Dendritic cell treated with granulocyte-macrophage colony-stimulating factor and Interleukin-4, amounts not matched to agents 40 ng/mL and 50 ng/mL, for 4 days (primary cell): ENCODE measurements at regions of chr16 and their contacts with region 1.

Region 1: GRCh38 chr16:83956336-83957289 is 3.6 kb downstream of the OSGIN1 start:
- H3K4me3 Mint-ChIP-seq: no peak overlapping the region
- H3K27ac Mint-ChIP-seq: no peak overlapping the region
- H3K4me1 Mint-ChIP-seq: peaks cover 41% of the 10 kb centered on the region
- H3K27me3 Mint-ChIP-seq: peaks cover 2% of the 10 kb centered on the region

Region 2: DNA sequence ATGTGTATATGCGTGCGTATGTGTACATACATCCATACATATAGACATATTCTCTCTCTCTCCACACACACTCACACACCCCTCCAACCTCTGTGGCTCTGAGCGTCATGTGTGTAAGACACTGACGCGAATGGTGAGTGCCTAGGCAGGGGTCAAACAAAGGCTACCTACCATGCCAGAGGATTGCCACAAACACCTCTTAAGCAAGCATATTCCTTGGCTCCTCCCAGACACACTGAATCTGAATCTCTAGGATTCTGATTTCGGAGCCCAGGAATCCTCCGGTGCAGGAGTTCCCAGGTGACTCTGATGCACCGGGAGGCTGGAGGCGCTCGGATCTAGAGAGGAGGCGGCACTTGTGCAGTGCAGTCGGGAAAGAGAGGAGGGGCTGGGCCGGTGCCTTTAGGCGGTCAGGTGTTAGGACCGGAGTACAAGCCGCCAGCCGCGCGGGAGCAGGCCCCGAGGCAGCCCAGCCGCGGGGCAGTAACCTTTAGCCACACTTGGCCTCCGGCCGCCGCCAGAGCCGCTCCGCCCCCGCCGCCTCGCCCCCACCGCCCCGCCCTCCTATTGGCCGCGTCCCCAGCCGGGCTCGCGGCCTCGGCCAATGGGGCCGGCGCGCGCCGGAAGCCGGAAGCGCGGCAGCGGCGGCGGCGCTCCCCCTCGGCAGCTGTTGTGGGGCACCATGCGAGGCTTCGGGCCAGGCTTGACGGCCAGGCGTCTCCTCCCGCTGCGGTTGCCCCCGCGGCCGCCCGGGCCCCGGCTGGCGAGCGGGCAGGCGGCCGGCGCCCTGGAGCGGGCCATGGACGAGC is 57.9 kb before region 1 on chr16 and contains the start of gene MLYCD:
- intact Hi-C with region 1: no loop called
- H3K4me3 Mint-ChIP-seq: peak within 1 kb of the TSS; percentile 89
- H3K27ac Mint-ChIP-seq: peak within 1 kb of the TSS; percentile 85
- H3K4me1 Mint-ChIP-seq: peaks cover 28% of the 10 kb centered on the region
- H3K27me3 Mint-ChIP-seq: peaks cover 12% of the 10 kb centered on the region

Region 3: GRCh38 chr16:84062734-84063640 is 106.4 kb after region 1 on chr16:
- intact Hi-C with region 1: loop called (anchors 5 kb)
- H3K4me3 Mint-ChIP-seq: no peak overlapping the region
- H3K27ac Mint-ChIP-seq: no peak overlapping the region
- H3K4me1 Mint-ChIP-seq: peaks cover 5% of the 10 kb centered on the region
- H3K27me3 Mint-ChIP-seq: no peaks in the 10 kb centered on the region

Region 4: DNA sequence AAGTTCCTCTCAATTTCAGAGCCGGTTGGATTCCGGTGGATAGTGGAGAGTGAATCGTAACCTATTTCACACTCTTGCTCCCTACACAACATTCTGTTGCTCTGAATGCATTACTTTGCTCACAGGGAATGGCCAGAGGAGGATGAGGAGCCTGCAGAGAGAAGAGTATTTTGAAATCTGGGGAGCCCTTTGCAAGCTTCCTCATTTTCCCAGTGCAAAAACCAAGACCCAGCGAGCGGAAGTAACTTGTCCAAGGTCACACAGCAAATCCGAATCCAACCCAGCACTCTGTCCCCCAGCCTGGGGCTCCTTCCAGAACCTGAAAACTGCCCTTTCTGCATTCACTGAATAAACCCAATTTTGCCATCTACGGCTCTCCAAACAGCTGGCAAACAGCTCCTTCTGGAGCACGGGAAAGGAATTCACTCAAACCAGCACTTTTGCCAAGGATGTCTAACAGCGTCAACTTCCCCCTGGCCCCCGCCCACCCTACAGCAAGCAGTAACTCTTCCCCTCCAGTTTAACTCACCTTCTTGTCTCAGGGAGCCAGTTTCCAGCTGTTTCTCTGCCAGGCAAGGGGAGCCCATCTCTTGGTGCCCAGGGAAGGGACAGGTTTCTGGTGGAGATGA is 282.6 kb after region 1 on chr16:
- intact Hi-C with region 1: no loop called
- H3K4me3 Mint-ChIP-seq: peak overlapping the region; percentile 32
- H3K27ac Mint-ChIP-seq: peak overlapping the region; percentile 45
- H3K4me1 Mint-ChIP-seq: peaks cover 17% of the 10 kb centered on the region
- H3K27me3 Mint-ChIP-seq: peaks cover 33% of the 10 kb centered on the region

Region 5: DNA sequence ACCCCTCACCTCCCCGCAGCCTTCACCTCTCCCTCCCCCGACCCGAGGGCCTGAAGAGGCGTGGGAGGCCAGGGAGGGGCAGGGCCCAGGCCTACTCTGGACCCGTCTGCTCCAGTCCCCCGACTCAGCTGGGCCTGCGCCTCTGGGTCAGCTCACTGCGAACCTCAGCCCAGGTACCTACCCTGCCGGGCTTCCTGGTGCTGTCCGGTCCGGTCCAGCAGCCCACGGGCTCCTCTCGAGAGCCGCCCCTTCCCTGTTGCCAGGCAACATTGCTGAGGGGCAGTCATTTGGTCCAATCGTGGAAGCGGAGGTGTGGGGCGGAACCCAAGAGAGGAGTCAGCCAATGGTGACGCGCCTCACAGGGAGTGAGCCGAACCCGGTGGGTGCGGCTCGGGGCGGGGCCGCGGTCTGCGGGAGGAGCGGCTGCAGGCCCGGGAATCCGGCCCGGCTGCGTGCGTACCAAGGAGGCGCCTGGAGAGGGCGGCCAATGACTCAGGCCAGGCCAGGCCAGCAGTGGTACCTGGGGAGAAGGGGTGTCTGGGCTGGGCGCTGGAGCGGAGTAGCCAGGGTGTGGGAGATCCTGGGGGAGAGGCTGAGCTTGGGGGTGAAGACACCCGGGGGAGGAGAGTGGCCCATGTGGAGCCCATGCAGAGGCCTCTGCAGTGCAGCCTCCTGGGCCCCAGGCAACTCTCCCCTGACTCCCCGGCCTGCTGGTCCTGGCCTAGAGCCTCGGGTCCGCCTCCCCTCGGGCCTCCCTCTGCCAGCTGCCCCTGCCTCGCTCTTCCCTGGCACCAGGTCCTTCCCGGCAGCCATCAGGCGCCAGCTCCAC is 548.0 kb after region 1 on chr16 and contains the start of gene MEAK7:
- intact Hi-C with region 1: loop called (anchors 5 kb)
- H3K4me3 Mint-ChIP-seq: peak within 1 kb of the TSS; percentile 94
- H3K27ac Mint-ChIP-seq: peak within 1 kb of the TSS; percentile 90
- H3K4me1 Mint-ChIP-seq: peaks cover 49% of the 10 kb centered on the region
- H3K27me3 Mint-ChIP-seq: peaks cover 1% of the 10 kb centered on the region